ENCODE measurements at regions of chr9 and their contacts with region 1.

Region 1: GRCh38 chr9:113737517-113738271 is 138.4 kb upstream of the ZNF618 start:
- DNase-seq: peak; percentile 69
- H3K4me3 ChIP-seq: no peak overlapping the region
- H3K27ac ChIP-seq: no peak overlapping the region
- H3K4me1 ChIP-seq: no peaks in the 10 kb centered on the region
- H3K27me3 ChIP-seq: peaks cover 6 to 13% of the 10 kb centered on the region in 2 experiments
- CTCF ChIP-seq: peak; percentile 72 to 78
- POLR2A ChIP-seq: no peak

Region 2: GRCh38 chr9:113682297-113682771 is 55.4 kb before region 1 on chr9:
- CTCF ChIA-PET with region 1: interaction called, 3 read pairs
- POLR2A ChIA-PET with region 1: no interaction called
- dilution Hi-C with region 1: no loop called
- intact Hi-C with region 1: loop called (anchors 2 kb)
- DNase-seq: peak; percentile 85
- H3K4me3 ChIP-seq: no peak overlapping the region
- H3K27ac ChIP-seq: no peak overlapping the region
- H3K4me1 ChIP-seq: no peaks in the 10 kb centered on the region
- H3K27me3 ChIP-seq: peaks cover 9 to 11% of the 10 kb centered on the region in 2 experiments
- CTCF ChIP-seq: peak; percentile 92 to 95
- POLR2A ChIP-seq: no peak

Region 3: GRCh38 chr9:113705928-113706519 is 31.7 kb before region 1 on chr9:
- CTCF ChIA-PET with region 1: no interaction called
- POLR2A ChIA-PET with region 1: no interaction called
- dilution Hi-C with region 1: no loop called
- intact Hi-C with region 1: no loop called
- DNase-seq: peak; percentile 33
- H3K4me3 ChIP-seq: no peak overlapping the region
- H3K27ac ChIP-seq: no peak overlapping the region
- H3K4me1 ChIP-seq: peaks cover 5% of the 10 kb centered on the region
- H3K27me3 ChIP-seq: peaks cover 6 to 14% of the 10 kb centered on the region in 2 experiments
- CTCF ChIP-seq: no peak
- POLR2A ChIP-seq: no peak

Region 4: GRCh38 chr9:113807173-113808061 is 69.7 kb after region 1 on chr9:
- CTCF ChIA-PET with region 1: interaction called, 8 read pairs
- POLR2A ChIA-PET with region 1: no interaction called
- dilution Hi-C with region 1: no loop called
- intact Hi-C with region 1: loop called (anchors 5 kb)
- DNase-seq: peak; percentile 73
- H3K4me3 ChIP-seq: peak overlapping the region in 1 of 3 experiments; percentile 25
- H3K27ac ChIP-seq: no peak overlapping the region
- H3K4me1 ChIP-seq: no peaks in the 10 kb centered on the region
- H3K27me3 ChIP-seq: no peaks in the 10 kb centered on the region
- CTCF ChIP-seq: peak; percentile 84 to 87
- POLR2A ChIP-seq: no peak

Region 5: DNA sequence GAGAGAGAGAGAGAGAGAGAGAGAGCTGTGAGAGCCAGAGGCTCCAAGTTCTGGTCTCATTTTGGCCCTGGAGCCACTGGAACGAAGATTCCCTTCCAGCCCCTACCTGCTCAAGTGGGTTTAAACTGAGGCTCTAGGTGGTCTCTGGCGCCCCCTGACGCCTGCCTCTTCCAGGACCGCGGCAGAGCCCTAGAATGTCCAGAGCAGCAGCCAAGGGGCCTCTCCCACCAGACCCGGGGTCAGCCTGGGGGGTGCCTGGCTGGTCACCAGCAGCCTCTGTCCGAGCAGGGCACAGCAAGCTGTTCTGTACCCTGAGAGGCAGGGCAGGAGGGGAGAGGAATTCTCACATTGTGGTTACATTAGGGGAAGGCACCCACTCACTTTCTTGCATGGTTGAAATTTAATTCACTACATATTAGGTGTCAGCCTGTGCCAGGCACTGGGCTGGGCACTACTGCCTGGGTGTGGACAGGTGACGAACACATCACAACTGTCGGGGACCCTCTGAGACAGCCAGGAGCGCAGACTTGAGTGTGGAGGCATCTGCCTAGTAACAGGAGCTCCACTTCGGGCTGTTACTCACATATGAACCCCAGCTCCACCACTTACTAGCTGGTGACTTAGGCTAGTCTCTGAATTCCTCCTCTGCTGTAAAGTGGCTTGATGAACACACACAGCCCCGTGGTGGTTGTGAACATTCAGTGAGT is 295.9 kb after region 1 on chr9:
- CTCF ChIA-PET with region 1: interaction called, 8 read pairs
- POLR2A ChIA-PET with region 1: no interaction called
- dilution Hi-C with region 1: no loop called
- intact Hi-C with region 1: loop called (anchors 1 kb)
- DNase-seq: peak; percentile 19
- H3K4me3 ChIP-seq: no peak overlapping the region
- H3K27ac ChIP-seq: no peak overlapping the region
- H3K4me1 ChIP-seq: peaks cover 6% of the 10 kb centered on the region
- H3K27me3 ChIP-seq: no peaks in the 10 kb centered on the region
- CTCF ChIP-seq: peak; percentile 26 to 68
- POLR2A ChIP-seq: no peak

Region 6: DNA sequence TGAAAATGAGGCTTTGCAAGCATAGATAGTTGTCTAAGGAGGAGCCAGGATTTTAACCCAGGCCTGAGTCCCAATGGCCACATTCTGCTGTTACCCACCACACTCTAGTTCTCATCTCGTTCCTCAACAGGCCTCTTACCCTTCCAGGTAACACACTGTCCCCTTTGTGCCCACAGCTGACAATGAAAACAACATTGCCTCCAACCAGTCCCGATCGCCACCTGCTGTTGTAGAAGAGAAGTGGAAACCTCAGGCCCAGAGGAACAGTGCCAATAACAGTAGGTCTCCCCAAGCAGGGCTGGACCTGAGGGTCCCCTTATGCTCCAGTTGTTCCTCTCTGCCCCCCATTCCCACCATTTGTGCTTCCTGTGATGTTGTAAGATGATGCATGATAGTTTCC is 310.0 kb after region 1 on chr9:
- CTCF ChIA-PET with region 1: interaction called, 21 read pairs
- POLR2A ChIA-PET with region 1: no interaction called
- dilution Hi-C with region 1: no loop called
- intact Hi-C with region 1: loop called (anchors 2 kb)
- DNase-seq: peak; percentile 19
- H3K4me3 ChIP-seq: no peak overlapping the region
- H3K27ac ChIP-seq: no peak overlapping the region
- H3K4me1 ChIP-seq: peaks cover 4% of the 10 kb centered on the region
- H3K27me3 ChIP-seq: no peaks in the 10 kb centered on the region
- CTCF ChIP-seq: peak in 1 of 2 donors; percentile 29
- POLR2A ChIP-seq: no peak